B cell (primary cell): ENCODE measurements at regions of chr12 and their contacts with region 1.

Region 1: GRCh38 chr12:53344824-53345485 is 8.8 kb upstream of the SP7 start:
- DNase-seq: peak; percentile 85
- ATAC-seq: peak; percentile 91
- H3K4me3 ChIP-seq: peak overlapping the region in 4 of 5 experiments; percentile 46 to 71 (median 66)
- H3K4me3 Mint-ChIP-seq: peak overlapping the region; percentile 100
- H3K27ac ChIP-seq: no peak overlapping the region
- H3K27ac Mint-ChIP-seq: peak overlapping the region; percentile 85
- H3K4me1 ChIP-seq: peaks cover 6 to 13% of the 10 kb centered on the region in 2 donors
- H3K4me1 Mint-ChIP-seq: peaks cover 14% of the 10 kb centered on the region
- H3K27me3 ChIP-seq: peaks cover 0 to 2% (median 0%) of the 10 kb centered on the region in 4 experiments
- H3K27me3 Mint-ChIP-seq: peaks cover 6% of the 10 kb centered on the region
- CTCF ChIP-seq: peak; percentile 72

Region 2: DNA sequence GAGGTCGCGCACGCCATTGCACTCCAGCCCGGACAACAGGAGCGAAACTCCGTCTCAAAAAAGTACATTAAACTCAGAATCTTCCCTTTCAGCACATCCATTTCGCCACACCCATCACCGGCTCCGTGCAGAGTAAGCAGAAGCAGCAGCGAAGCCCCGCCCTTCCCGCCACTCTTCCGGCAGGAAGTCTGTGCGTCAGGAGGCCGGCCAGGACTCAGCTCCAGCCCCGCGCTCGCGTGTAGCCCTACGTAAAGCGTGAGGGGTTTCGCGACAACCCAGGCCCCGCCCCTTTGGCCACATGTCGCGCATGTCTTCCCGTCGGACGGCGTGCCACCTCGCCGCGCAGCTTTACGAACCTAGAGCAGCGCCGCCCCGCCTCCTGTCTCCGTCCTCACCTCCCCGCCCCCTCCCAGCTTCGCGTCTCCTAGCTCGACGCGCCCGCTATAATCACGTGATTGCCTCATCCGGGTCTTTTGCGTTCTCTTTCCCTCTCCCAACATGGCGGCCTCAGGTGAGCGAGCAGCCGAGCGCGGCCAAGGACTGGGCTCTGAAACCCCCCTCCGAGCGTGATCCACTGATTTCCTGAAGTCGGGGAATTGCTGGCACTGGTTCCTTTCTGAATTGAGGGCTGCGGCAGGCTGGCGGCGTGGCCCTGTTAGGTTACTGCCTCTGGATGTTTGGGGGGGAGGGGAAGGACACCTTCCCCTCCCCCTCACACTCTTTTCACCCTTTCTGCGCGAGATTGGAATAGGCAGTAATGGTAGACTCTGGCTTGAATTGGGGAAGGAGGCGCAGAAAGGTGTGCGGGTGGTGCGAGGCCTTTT is 338.8 kb before region 1 on chr12 and contains the start of gene EIF4B:
- CTCF ChIA-PET with region 1: no interaction called
- POLR2A ChIA-PET with region 1: no interaction called
- intact Hi-C with region 1: no loop called
- DNase-seq: peak; percentile 100
- ATAC-seq: peak; percentile 91
- H3K4me3 ChIP-seq: peak within 1 kb of the TSS; percentile 72 to 100 (median 82)
- H3K4me3 Mint-ChIP-seq: peak within 1 kb of the TSS; percentile 98
- H3K27ac ChIP-seq: peak within 1 kb of the TSS; percentile 79 to 92
- H3K27ac Mint-ChIP-seq: peak within 1 kb of the TSS; percentile 98
- H3K4me1 ChIP-seq: peaks cover 38 to 46% of the 10 kb centered on the region in 2 donors
- H3K4me1 Mint-ChIP-seq: peaks cover 44% of the 10 kb centered on the region
- H3K27me3 ChIP-seq: no peaks in the 10 kb centered on the region
- H3K27me3 Mint-ChIP-seq: no peaks in the 10 kb centered on the region
- CTCF ChIP-seq: no peak
- total RNA-seq, gene EIF4B: 631 and 674 TPM in 2 replicates

Region 3: DNA sequence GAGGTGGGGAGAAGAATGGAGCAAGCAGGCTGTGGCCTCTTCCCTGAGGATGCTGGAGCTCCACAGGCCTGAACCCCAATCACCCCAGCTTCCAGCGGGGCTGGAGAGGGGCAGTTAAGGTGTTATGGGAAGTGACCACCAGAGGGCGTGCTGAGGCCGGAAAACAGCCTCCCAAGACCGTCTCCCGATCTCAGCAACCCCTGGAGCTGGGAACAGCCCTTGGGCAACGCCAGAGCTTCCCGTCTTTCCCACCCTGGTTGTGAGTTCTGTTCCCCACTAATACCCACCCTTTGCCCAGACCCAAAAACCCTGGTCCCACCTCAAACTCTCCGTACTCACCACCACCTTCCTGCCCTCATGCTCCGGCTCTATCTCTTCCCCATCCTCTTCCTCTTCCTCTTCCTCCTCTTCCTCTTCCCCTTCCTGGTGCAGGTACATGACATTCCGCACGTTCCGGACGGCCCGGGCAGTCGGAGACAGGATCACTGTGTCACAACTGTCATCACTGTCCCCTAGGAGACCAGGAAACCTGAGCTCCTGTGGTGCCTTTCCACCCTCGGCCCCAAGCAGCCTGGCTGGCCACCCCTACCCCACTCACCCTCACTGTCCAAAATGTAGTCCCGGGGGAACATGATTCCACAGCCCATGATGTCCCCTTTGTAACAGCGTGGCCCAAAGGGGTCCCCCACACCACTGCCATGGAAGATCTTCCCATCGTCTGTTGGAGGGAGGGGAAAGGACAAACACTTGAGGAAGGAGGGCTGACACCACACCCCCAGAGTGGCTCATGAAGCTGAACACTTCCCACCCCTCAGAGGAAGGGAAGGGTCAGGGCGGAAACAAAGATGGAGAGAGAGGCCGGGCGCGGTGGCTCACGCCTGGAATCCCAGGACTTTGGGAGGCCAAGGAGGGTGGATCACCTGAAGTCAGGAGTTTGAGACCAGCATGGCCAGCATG is 278.7 kb before region 1 on chr12:
- CTCF ChIA-PET with region 1: interaction called, 22 read pairs
- POLR2A ChIA-PET with region 1: no interaction called
- intact Hi-C with region 1: no loop called
- DNase-seq: peak; percentile 77
- ATAC-seq: peak; percentile 75
- H3K4me3 ChIP-seq: no peak overlapping the region
- H3K4me3 Mint-ChIP-seq: no peak overlapping the region
- H3K27ac ChIP-seq: no peak overlapping the region
- H3K27ac Mint-ChIP-seq: peak overlapping the region; percentile 26
- H3K4me1 ChIP-seq: peaks cover 0 to 2% of the 10 kb centered on the region in 2 donors
- H3K4me1 Mint-ChIP-seq: peaks cover 5% of the 10 kb centered on the region
- H3K27me3 ChIP-seq: no peaks in the 10 kb centered on the region
- H3K27me3 Mint-ChIP-seq: no peaks in the 10 kb centered on the region
- CTCF ChIP-seq: peak; percentile 87

Region 4: DNA sequence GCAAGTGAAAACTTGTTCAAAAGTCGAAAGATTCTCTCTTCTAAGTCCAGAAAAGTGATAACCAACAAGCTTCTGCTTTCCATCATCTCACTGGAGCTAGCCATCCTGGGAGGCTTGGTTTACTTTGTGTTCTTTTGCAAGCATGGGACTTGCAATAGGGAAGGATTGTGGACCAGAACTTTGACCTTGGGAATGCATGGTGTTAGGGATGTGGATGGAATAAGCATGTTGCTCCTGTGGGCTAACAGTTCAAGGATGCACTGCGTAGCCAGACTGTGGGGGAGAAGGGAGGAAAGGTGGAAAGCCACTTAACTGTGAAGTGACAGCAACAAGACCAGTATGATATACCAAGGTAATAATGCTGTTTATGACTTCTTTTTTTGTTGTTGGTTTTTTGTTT is 213.1 kb before region 1 on chr12:
- CTCF ChIA-PET with region 1: no interaction called
- POLR2A ChIA-PET with region 1: no interaction called
- intact Hi-C with region 1: no loop called
- DNase-seq: no peak
- ATAC-seq: no peak
- H3K4me3 ChIP-seq: no peak overlapping the region
- H3K4me3 Mint-ChIP-seq: no peak overlapping the region
- H3K27ac ChIP-seq: no peak overlapping the region
- H3K27ac Mint-ChIP-seq: no peak overlapping the region
- H3K4me1 ChIP-seq: no peaks in the 10 kb centered on the region
- H3K4me1 Mint-ChIP-seq: no peaks in the 10 kb centered on the region
- H3K27me3 ChIP-seq: peaks cover 0 to 10% (median 0%) of the 10 kb centered on the region in 4 experiments
- H3K27me3 Mint-ChIP-seq: peaks cover 16% of the 10 kb centered on the region
- CTCF ChIP-seq: no peak

Region 5: DNA sequence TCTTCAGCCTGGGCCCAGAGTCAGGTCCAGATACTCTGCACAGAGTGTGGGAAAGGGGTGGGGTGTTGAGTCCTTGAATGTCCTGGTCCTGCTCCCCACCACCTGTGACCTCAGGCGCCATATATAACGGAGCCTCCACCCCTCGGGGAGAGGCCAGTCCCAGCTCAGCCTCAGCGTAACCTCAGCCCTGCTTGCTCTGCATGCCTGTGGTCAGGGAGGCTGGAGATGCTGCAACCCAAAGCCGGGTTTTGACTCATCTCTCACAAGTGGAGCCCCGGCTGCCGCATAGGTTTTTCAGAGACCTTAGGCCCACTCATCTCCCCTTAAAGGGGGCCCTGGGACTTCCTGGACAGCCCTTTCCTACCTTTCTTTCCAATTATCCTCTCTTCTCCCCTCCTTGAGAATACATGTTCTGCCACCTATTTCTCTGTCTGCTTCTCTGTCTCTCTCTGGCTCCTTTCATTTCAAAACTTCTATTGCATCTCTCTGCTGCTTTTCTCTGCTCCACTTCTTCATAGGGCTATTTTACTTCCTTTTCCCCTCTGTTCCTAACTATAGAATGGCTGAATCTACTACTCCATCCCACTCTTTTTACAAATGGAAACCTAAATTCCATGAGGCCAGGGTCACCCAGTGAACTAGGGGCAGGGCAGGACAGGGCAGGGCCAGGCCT is 139.1 kb before region 1 on chr12:
- CTCF ChIA-PET with region 1: interaction called, 67 read pairs
- POLR2A ChIA-PET with region 1: no interaction called
- intact Hi-C with region 1: no loop called
- DNase-seq: peak; percentile 40
- ATAC-seq: peak; percentile 53
- H3K4me3 ChIP-seq: peak overlapping the region; percentile 68 to 90 (median 73)
- H3K4me3 Mint-ChIP-seq: peak overlapping the region; percentile 82
- H3K27ac ChIP-seq: peak overlapping the region; percentile 65 to 91
- H3K27ac Mint-ChIP-seq: peak overlapping the region; percentile 81
- H3K4me1 ChIP-seq: peaks cover 95 to 99% of the 10 kb centered on the region in 2 donors
- H3K4me1 Mint-ChIP-seq: peaks cover 74% of the 10 kb centered on the region
- H3K27me3 ChIP-seq: no peaks in the 10 kb centered on the region
- H3K27me3 Mint-ChIP-seq: no peaks in the 10 kb centered on the region
- CTCF ChIP-seq: no peak

Region 6: GRCh38 chr12:53267999-53268647 is 76.8 kb before region 1 on chr12 and contains the start of gene ESPL1:
- CTCF ChIA-PET with region 1: interaction called, 12 read pairs
- POLR2A ChIA-PET with region 1: no interaction called
- intact Hi-C with region 1: no loop called
- DNase-seq: peak; percentile 92
- ATAC-seq: peak; percentile 93
- H3K4me3 ChIP-seq: peak within 1 kb of the TSS; percentile 63 to 90 (median 70)
- H3K4me3 Mint-ChIP-seq: peak within 1 kb of the TSS; percentile 97
- H3K27ac ChIP-seq: peak within 1 kb of the TSS; percentile 68 to 92
- H3K27ac Mint-ChIP-seq: peak within 1 kb of the TSS; percentile 87
- H3K4me1 ChIP-seq: peaks cover 13 to 20% of the 10 kb centered on the region in 2 donors
- H3K4me1 Mint-ChIP-seq: peaks cover 21% of the 10 kb centered on the region
- H3K27me3 ChIP-seq: no peaks in the 10 kb centered on the region
- H3K27me3 Mint-ChIP-seq: no peaks in the 10 kb centered on the region
- CTCF ChIP-seq: peak; percentile 49
- total RNA-seq, gene ESPL1: 1.7 and 2.4 TPM in 2 replicates

Region 7: DNA sequence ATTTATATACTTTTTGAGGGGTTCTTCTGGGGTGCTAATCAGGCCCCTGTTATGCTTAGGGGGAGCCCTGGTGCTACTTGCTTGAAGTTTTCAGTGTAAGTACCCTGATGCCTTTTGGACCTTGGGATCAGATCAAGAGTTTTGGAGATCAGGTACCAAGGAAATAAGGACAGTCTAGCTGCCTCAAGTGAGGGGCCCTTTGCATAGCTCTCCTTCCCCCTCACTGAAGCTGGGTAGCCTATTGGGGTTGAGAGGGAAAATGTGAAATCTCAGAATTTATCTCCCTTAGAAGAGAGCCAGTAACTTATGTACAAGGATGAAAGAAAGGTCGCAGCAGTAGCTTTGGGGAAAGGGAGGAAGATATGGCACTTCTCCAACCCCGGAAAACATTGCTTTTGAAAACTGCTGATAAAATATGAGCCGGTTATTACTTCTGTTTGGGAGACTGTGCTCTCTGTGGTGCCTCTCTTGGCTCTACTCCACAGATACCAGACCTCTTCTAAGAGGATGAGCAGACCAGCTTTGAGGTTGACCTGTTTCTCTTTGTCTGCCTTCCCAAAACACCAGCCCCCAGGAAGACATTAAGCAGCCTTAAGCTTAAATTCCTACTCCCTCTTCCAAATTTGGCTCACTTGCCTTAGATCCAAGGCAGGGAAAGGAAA is 69.9 kb after region 1 on chr12:
- CTCF ChIA-PET with region 1: interaction called, 384 read pairs
- POLR2A ChIA-PET with region 1: interaction called, 4 read pairs
- intact Hi-C with region 1: no loop called
- DNase-seq: no peak
- ATAC-seq: no peak
- H3K4me3 ChIP-seq: no peak overlapping the region
- H3K4me3 Mint-ChIP-seq: no peak overlapping the region
- H3K27ac ChIP-seq: no peak overlapping the region
- H3K27ac Mint-ChIP-seq: peak overlapping the region; percentile 46
- H3K4me1 ChIP-seq: peaks cover 24 to 29% of the 10 kb centered on the region in 2 donors
- H3K4me1 Mint-ChIP-seq: peaks cover 57% of the 10 kb centered on the region
- H3K27me3 ChIP-seq: no peaks in the 10 kb centered on the region
- H3K27me3 Mint-ChIP-seq: no peaks in the 10 kb centered on the region
- CTCF ChIP-seq: no peak